Vagina (tissue), 2 donors: ENCODE measurements at regions of chr12 and their contacts with region 1.

Region 1: DNA sequence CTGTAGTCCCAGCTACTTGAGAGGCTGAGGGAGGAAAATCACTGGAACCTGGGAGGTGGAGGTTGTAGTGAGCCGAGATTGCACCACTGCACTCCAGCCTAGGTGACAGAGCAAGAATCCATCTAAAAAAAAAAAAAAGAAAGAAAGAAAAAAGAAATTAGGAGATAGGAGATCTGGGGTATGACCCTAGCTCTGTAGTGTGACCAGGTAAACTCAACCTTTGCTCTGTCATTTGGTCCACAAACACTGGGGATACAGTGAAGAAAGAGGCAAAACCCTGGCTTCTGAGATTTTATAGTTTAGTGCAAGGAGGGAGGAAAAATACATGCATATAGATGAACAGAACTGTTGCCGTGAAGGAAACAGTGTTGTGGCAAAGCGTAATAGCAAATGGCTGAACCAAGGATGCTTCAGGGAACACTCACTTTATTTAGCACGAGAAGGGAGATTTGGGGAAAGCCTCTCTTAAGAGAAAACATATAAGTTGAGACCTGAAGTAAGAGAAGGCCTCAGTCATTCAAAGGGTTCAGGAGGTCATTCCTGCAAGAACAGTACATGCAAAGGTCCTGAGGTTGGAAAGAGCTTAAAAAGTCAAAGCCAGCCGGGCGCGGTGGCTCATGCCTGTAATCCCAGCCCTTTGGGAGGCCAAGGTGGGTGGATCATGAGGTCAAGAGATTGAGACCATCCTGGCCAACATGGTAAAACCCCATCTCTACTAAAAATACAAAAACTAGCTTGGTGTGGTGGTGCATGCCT is 29.6 kb upstream of the ATXN2 start:
- DNase-seq: no peak
- H3K4me3 ChIP-seq: no peak overlapping the region
- H3K27ac ChIP-seq: no peak overlapping the region
- H3K4me1 ChIP-seq: no peaks in the 10 kb centered on the region
- H3K27me3 ChIP-seq: no peaks in the 10 kb centered on the region
- CTCF ChIP-seq: no peak
- POLR2A ChIP-seq: no peak

Region 2: DNA sequence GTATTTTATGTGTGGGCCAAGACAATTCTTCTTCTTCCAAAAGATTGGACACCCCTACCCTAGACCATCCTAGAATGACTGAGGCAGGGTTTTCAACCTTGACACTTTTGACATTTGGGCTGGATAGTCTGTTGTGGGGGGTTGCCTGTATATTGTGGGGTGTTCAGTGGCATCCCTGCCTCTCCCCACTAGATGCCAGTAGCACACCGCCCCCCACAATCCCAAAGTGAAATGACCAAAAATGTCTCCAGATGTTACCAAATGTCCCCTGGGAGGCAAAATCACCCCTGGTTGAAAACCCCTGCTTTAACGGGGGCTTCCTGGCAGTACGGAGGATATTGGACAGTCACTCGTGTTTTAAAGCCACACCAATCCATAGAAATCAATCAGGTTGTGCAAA is 479.4 kb before region 1 on chr12:
- intact Hi-C with region 1: loop called (anchors 5 kb)
- DNase-seq: no peak
- H3K4me3 ChIP-seq: no peak overlapping the region
- H3K27ac ChIP-seq: no peak overlapping the region
- H3K4me1 ChIP-seq: no peaks in the 10 kb centered on the region
- H3K27me3 ChIP-seq: no peaks in the 10 kb centered on the region
- CTCF ChIP-seq: no peak
- POLR2A ChIP-seq: no peak

Region 3: DNA sequence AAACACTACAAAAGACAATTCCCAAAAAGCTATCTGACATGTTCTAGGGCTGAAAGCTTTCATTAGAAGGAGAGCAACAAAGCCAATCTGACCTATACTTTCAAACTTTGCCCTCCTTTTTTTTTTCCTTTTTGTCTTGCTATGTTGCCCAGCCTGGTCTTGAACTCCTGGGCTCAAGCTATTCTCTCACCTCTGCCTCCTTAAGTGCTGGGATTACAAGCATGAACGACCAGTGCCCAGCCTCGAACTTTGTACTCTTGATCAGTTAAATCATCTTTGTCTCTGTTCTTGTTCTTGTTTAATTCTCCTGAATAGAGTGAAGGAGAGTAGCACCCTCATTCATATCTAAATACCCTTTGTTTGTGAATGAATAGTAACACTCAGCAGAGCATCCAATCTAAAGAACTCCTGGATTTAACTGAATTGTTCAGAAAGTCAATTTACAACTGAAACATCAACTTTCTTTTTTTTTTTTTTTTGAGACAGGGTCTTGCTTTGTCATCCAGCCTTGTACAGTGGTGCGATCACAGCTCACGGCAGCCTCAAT is 406.6 kb after region 1 on chr12:
- intact Hi-C with region 1: no loop called
- DNase-seq: no peak
- H3K4me3 ChIP-seq: no peak overlapping the region
- H3K27ac ChIP-seq: no peak overlapping the region
- H3K4me1 ChIP-seq: no peaks in the 10 kb centered on the region
- H3K27me3 ChIP-seq: no peaks in the 10 kb centered on the region
- CTCF ChIP-seq: no peak
- POLR2A ChIP-seq: no peak